ENCODE measurements at regions of chr7 and their contacts with region 1.

Region 1: GRCh38 chr7:91034459-91035368 is 229.5 kb upstream of the FZD1 start:
- DNase-seq: peak in 1 of 2 experiments; percentile 42
- H3K4me3 ChIP-seq: no peak overlapping the region
- H3K27ac ChIP-seq: no peak overlapping the region
- H3K4me1 ChIP-seq: no peaks in the 10 kb centered on the region
- H3K27me3 ChIP-seq: no peaks in the 10 kb centered on the region
- CTCF ChIP-seq: peak; percentile 53

Region 2: DNA sequence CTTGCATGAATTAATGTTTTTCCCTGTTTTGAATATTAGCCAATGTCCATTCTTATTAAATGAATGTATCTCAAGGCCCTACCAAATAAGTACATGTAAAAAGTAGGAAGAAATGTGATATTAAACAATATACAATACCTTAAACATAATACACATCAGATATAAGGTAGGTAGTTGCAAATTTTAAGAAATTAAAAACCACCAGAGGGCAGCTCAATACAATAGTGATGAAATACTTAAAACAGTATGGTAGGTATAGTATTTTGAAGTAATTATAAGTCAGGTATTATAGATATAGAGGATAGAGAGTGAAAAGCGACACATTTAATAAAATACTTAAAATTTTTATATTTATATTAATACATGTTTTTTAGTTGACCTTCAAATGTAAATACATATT is 482.2 kb before region 1 on chr7:
- CTCF ChIA-PET with region 1: interaction called, 4 read pairs
- POLR2A ChIA-PET with region 1: no interaction called
- intact Hi-C with region 1: loop called (anchors 1 kb)
- DNase-seq: no peak
- H3K4me3 ChIP-seq: no peak overlapping the region
- H3K27ac ChIP-seq: no peak overlapping the region
- H3K4me1 ChIP-seq: no peaks in the 10 kb centered on the region
- H3K27me3 ChIP-seq: no peaks in the 10 kb centered on the region
- CTCF ChIP-seq: no peak

Region 3: DNA sequence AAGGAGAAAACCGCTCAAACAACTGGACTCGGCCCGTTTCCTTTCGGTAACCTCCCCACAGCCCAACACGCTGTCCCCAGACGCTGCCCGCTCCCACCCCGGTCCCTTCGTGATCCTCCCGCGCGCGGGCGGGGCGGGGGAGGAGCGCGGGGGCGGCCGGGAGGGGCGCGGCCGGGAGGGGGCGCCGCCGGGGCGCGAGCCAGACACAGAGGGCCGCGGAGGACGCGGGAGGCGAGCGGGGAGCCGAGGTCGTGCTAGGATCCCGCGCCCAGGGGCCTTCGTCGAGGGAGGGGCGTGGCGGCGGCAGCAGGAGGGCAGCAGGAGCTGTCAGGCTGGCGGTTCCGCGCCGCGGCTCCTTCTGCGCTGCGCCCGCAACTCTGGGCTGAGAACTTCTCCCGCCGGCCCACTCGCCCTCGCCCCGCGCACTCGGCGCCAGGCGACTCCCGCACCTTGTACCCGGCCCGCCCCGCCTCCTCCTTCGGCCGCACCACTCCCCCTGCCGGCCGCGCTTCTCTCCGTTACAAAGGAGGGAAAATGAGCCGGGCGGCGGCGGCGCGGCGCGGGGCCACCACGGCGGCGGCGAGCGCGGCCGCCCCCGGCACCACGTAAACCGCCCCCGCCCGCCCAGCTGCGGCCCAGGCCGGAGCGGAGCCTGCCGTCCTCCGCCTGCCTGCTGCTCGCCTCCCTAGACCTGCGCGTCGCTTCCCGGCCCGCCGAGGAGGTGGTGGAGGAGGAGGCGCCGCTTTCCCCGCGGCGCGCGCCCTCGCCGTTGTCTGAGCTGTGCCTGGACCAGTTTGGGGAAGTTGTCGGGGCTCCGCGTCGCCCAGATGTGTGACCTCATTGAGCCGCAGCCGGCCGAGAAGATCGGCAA is 438.7 kb before region 1 on chr7 and contains the start of gene CDK14:
- CTCF ChIA-PET with region 1: no interaction called
- POLR2A ChIA-PET with region 1: no interaction called
- intact Hi-C with region 1: loop called (anchors 1 kb)
- DNase-seq: peak in 1 of 2 experiments; percentile 79
- H3K4me3 ChIP-seq: peak within 1 kb of the TSS; percentile 59
- H3K27ac ChIP-seq: no peak within 1 kb of the TSS
- H3K4me1 ChIP-seq: peaks cover 8% of the 10 kb centered on the region; the same call in 1 of the 2 replicates
- H3K27me3 ChIP-seq: peaks cover 24% of the 10 kb centered on the region
- CTCF ChIP-seq: no peak; the same call in 1 of the 2 replicates
- total RNA-seq, gene CDK14: 39.1 and 41.6 TPM in 2 replicates

Measured in PC-9 (cell line).